AG04450 (cell line): ENCODE measurements at regions of chr12 and their contacts with region 1.

Region 1: GRCh38 chr12:109844983-109845823 is 12.0 kb upstream of the TRPV4 start:
- DNase-seq: peak; percentile 27
- H3K4me3 ChIP-seq: peak overlapping the region; percentile 54
- H3K27ac ChIP-seq: no peak overlapping the region
- H3K27me3 ChIP-seq: no peaks in the 10 kb centered on the region
- CTCF ChIP-seq: peak; percentile 97

Region 2: GRCh38 chr12:109828236-109828550 is 17.0 kb before region 1 on chr12:
- CTCF ChIA-PET with region 1: interaction called, 43 read pairs
- POLR2A ChIA-PET with region 1: interaction called, 3 read pairs
- DNase-seq: no peak
- H3K4me3 ChIP-seq: no peak overlapping the region
- H3K27ac ChIP-seq: no peak overlapping the region
- H3K27me3 ChIP-seq: no peaks in the 10 kb centered on the region
- CTCF ChIP-seq: no peak

Region 3: DNA sequence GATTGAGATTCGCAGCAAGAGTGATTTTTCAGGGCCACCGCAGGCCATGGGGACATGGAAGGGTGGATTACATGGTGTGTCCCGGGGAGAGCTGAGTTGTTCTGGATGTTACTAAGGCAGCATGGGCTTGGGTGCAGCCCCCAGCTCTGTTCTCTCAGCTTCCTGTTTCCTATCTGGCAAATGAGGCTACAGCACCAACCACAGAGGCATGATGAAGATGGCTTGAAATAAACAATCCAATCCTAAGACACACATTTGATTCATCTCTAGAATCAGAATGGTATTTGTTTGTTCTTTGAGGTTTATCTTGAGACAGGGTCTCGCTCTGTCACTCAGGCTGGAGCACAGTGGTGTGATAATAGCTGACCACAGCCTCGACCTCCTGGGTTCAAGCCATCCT is 13.6 kb after region 1 on chr12:
- CTCF ChIA-PET with region 1: interaction called, 43 read pairs
- POLR2A ChIA-PET with region 1: no interaction called
- DNase-seq: no peak
- H3K4me3 ChIP-seq: no peak overlapping the region
- H3K27ac ChIP-seq: peak overlapping the region; percentile 21
- H3K27me3 ChIP-seq: no peaks in the 10 kb centered on the region
- CTCF ChIP-seq: no peak

Region 4: GRCh38 chr12:109870648-109871047 is 25.4 kb after region 1 on chr12:
- CTCF ChIA-PET with region 1: interaction called, 27 read pairs
- POLR2A ChIA-PET with region 1: no interaction called
- DNase-seq: no peak
- H3K4me3 ChIP-seq: no peak overlapping the region
- H3K27ac ChIP-seq: no peak overlapping the region
- H3K27me3 ChIP-seq: no peaks in the 10 kb centered on the region
- CTCF ChIP-seq: no peak

Region 5: GRCh38 chr12:109888179-109889020 is 43.2 kb after region 1 on chr12:
- CTCF ChIA-PET with region 1: interaction called, 12 read pairs
- POLR2A ChIA-PET with region 1: no interaction called
- DNase-seq: peak; percentile 72
- H3K4me3 ChIP-seq: no peak overlapping the region
- H3K27ac ChIP-seq: peak overlapping the region; percentile 86
- H3K27me3 ChIP-seq: no peaks in the 10 kb centered on the region
- CTCF ChIP-seq: 0 out of 2 replicates have a peak, but pooled peaks have one; percentile 12